GM12878 (cell line): ENCODE measurements at regions of chr11 and their contacts with region 1.

Region 1: DNA sequence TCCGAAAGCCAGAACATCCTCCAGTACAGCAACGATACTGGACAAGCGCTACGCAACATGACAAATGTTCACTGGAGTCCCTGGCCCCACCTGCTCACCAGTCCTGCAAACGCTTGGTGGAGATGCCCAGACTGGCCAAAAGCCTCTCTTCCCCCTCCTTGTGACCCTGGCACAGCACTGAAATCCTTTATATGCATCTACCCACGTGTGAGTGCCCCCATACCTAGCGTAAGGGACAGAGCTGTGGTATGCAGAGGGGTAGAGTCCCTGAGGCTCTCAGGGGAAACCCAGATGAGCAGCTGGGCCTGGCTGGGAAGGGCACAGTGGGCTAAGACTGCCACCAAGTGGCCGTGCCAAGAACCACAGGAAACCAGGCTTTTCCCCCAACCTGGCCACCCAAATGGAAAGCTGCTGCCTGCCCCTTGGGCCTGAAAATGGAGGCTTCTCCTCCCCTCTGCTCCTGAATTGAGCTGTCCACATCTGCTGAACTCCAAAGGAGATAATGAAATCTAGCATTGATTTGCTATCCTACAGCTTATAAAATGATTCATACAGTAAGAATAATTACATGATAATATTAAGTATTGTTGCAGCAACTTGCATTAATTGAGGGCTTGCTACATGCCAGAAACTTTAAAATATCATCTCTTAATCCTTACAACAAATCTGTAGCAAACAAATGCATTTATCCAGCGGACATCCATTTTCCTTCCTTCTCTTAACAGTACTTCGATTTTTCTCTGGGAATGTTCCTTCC is 24.8 kb upstream of the TTC12 start:
- DNase-seq: peak; percentile 33
- ATAC-seq: peak; percentile 99
- H3K4me3 ChIP-seq: no peak overlapping the region
- H3K27ac ChIP-seq: no peak overlapping the region
- H3K4me1 ChIP-seq: no peaks in the 10 kb centered on the region
- H3K27me3 ChIP-seq: 0 out of 4 replicates have a peak, but pooled peaks cover 0 to 2% of the 10 kb centered on the region in 2 experiments
- CTCF ChIP-seq: peak; percentile 89 to 98 (median 97)
- EP300 ChIP-seq: no peak
- POLR2A ChIP-seq: no peak
- RAD21 ChIP-seq: peak; percentile 96

Region 2: DNA sequence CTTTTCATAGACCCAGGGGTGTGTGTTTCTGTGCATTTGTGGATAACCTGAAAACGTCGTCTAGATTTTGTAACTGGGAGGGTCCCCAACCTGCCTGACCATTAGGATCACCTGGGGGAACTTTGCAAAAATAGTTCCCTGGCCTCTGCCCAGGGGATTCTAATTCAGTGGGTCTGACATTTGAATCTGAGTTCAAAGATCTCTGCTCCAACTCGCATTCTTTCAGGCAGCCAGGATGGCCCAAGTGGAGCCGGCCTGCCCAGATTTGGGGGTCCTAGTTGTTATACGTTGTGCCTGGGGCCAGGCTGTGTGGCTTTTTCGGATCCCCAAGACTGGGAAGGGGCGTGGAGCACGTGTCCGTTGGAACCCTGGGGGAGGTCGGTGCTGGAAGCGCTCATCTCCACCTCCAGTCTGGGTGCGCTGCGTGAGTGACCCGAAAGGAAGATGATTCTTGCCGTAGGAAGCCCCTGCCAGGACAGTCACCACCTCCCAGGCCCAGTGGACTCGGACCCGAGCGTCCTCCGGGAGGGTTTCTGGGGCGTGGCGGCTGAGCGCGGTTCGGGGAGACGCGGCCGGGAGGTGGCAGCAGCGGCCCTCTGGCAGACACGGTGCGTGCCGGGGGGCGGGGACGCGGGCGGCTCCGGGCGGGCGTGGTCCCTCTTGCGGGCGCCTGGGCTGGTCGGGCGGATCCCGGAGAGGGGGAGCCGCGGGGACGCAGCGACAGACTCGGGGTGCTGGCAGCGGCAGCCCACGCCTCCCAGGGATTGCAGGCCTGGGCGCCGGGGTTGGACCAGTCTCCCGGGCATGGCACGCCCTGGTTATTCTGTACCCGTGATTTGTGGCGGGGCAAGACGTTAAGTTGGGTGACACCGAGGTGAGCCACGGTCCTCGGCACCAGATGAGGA is 999.8 kb before region 1 on chr11:
- CTCF ChIA-PET with region 1: interaction called, 23 read pairs
- POLR2A ChIA-PET with region 1: no interaction called
- RAD21 ChIA-PET with region 1: interaction called, 7 read pairs
- SMC1A ChIA-PET with region 1: interaction called, 7 read pairs
- in situ Hi-C with region 1: loop called (anchors 5 kb)
- intact Hi-C with region 1: loop called (anchors 1 kb)
- DNase-seq: no peak
- ATAC-seq: peak; percentile 100
- H3K4me3 ChIP-seq: peak overlapping the region; percentile 68; the same call in 1 of the 2 replicates
- H3K27ac ChIP-seq: no peak overlapping the region
- H3K4me1 ChIP-seq: peaks cover 4% of the 10 kb centered on the region; the same call in 1 of the 2 replicates
- H3K27me3 ChIP-seq: no peaks in the 10 kb centered on the region
- CTCF ChIP-seq: peak; percentile 72 to 73 (median 73)
- EP300 ChIP-seq: no peak
- POLR2A ChIP-seq: no peak
- RAD21 ChIP-seq: peak; percentile 71

Region 3: DNA sequence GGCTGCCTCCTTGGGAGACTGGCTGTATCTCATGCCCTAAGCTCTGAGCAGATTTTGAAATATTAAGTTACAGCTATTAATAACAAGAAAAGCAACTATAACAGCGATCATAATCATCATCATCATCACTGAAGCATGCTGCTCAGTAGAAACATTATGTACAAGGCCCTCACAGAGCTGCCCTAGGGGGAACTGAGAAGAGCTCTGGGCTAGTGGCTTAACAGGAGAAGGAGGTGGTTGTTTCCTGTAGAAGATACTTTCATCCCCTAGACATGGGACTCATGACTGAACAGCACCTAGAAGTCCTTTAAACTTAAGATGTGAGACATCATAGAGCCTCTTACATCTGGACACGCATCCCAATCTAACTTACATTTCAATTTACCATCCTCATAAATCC is 696.2 kb before region 1 on chr11:
- CTCF ChIA-PET with region 1: interaction called, 66 read pairs
- POLR2A ChIA-PET with region 1: no interaction called
- RAD21 ChIA-PET with region 1: interaction called, 34 read pairs
- SMC1A ChIA-PET with region 1: interaction called, 33 read pairs
- in situ Hi-C with region 1: loop called (anchors 5 kb)
- intact Hi-C with region 1: loop called (anchors 1 kb)
- DNase-seq: no peak
- ATAC-seq: peak; percentile 55; the same call in 2 of the 3 replicates
- H3K4me3 ChIP-seq: no peak overlapping the region
- H3K27ac ChIP-seq: no peak overlapping the region
- H3K4me1 ChIP-seq: peaks cover 10% of the 10 kb centered on the region
- H3K27me3 ChIP-seq: no peaks in the 10 kb centered on the region; a peak in 1 of 4 replicates
- CTCF ChIP-seq: no peak
- EP300 ChIP-seq: no peak
- POLR2A ChIP-seq: no peak
- RAD21 ChIP-seq: no peak

Region 4: GRCh38 chr11:112795142-112795815 is 494.3 kb before region 1 on chr11:
- CTCF ChIA-PET with region 1: interaction called, 12 read pairs
- POLR2A ChIA-PET with region 1: no interaction called
- RAD21 ChIA-PET with region 1: interaction called, 9 read pairs
- SMC1A ChIA-PET with region 1: interaction called, 3 read pairs
- in situ Hi-C with region 1: no loop called
- intact Hi-C with region 1: loop called (anchors 1 kb)
- DNase-seq: no peak
- ATAC-seq: peak; percentile 94
- H3K4me3 ChIP-seq: no peak overlapping the region
- H3K27ac ChIP-seq: no peak overlapping the region
- H3K4me1 ChIP-seq: 0 out of 2 replicates have a peak, but pooled peaks cover 3% of the 10 kb centered on the region
- H3K27me3 ChIP-seq: no peaks in the 10 kb centered on the region; a peak in 2 of 4 replicates
- CTCF ChIP-seq: peak; percentile 66 to 77 (median 77)
- EP300 ChIP-seq: no peak
- POLR2A ChIP-seq: no peak
- RAD21 ChIP-seq: peak; percentile 64

Region 5: GRCh38 chr11:113113801-113114706 is 175.6 kb before region 1 on chr11:
- CTCF ChIA-PET with region 1: no interaction called
- POLR2A ChIA-PET with region 1: no interaction called
- RAD21 ChIA-PET with region 1: no interaction called
- SMC1A ChIA-PET with region 1: no interaction called
- in situ Hi-C with region 1: no loop called
- intact Hi-C with region 1: loop called (anchors 5 kb)
- DNase-seq: no peak
- ATAC-seq: peak; percentile 82
- H3K4me3 ChIP-seq: no peak overlapping the region
- H3K27ac ChIP-seq: no peak overlapping the region
- H3K4me1 ChIP-seq: no peaks in the 10 kb centered on the region
- H3K27me3 ChIP-seq: peaks cover 0 to 3% of the 10 kb centered on the region in 2 experiments; a peak in 1 of 4 replicates
- CTCF ChIP-seq: peak; percentile 44 to 55 (median 44)
- EP300 ChIP-seq: no peak
- POLR2A ChIP-seq: no peak
- RAD21 ChIP-seq: peak; percentile 48

Region 6: DNA sequence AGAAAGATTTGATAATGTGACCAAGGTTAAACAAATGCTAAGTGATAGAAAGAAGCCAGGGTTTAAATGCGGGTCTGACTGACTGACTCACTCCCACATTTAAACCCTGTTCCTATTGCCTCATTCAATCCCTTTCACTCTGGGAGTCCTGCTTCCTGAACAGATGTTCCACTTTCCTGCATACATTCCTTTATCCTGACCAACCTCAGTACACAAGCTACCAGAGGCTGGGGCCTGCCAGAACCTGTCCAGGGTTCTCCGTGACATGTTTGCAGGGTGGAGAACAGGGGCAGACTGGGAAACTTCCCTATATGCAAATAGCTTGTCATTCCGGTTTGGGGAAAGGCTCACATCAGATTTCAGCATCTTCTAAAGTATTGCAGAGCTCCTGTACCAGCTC is 94.9 kb after region 1 on chr11:
- CTCF ChIA-PET with region 1: no interaction called
- POLR2A ChIA-PET with region 1: no interaction called
- RAD21 ChIA-PET with region 1: no interaction called
- SMC1A ChIA-PET with region 1: no interaction called
- in situ Hi-C with region 1: no loop called
- intact Hi-C with region 1: no loop called
- DNase-seq: no peak
- ATAC-seq: no peak
- H3K4me3 ChIP-seq: no peak overlapping the region
- H3K27ac ChIP-seq: no peak overlapping the region
- H3K4me1 ChIP-seq: no peaks in the 10 kb centered on the region
- H3K27me3 ChIP-seq: peaks cover 1 to 5% of the 10 kb centered on the region in 2 experiments
- CTCF ChIP-seq: no peak
- EP300 ChIP-seq: no peak
- POLR2A ChIP-seq: no peak
- RAD21 ChIP-seq: no peak